MCF 10A (cell line): ENCODE measurements at regions of chr1 and their contacts with region 1.

Region 1: DNA sequence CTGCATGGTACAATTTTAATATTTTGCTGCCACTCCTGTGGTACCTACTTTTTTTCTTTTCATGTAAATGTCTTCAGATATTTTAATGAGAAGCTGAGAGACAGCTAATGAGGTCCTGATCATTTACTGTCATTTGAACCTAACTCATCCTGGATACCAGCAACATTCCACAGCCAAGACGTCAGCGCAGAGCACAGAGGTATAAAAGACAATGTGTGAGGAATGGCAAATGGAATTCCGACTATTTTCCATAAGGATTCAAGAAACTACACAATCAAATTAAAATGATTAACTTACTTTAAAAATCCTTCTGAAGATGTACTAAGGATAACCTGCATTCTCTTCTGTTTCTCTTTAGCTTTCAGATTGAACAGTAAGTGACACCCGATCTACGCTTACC is 38.8 kb downstream of the HEATR1 start:
- DNase-seq: no peak
- H3K4me3 Mint-ChIP-seq: no peak overlapping the region
- H3K27ac Mint-ChIP-seq: no peak overlapping the region
- H3K4me1 Mint-ChIP-seq: peaks cover 10% of the 10 kb centered on the region
- H3K27me3 Mint-ChIP-seq: no peaks in the 10 kb centered on the region
- CTCF ChIP-seq: no peak

Region 2: GRCh38 chr1:236552901-236553300 is 12.6 kb before region 1 on chr1:
- CTCF ChIA-PET with region 1: interaction called, 6 read pairs
- POLR2A ChIA-PET with region 1: interaction called, 14 read pairs
- intact Hi-C with region 1: no loop called
- DNase-seq: no peak
- H3K4me3 Mint-ChIP-seq: no peak overlapping the region
- H3K27ac Mint-ChIP-seq: peak overlapping the region; percentile 21
- H3K4me1 Mint-ChIP-seq: no peaks in the 10 kb centered on the region
- H3K27me3 Mint-ChIP-seq: no peaks in the 10 kb centered on the region
- CTCF ChIP-seq: no peak